ENCODE measurements at regions of chr2 and their contacts with region 1.

Region 1: GRCh38 chr2:105576440-105577252 is 168.1 kb upstream of the NCK2 start:
- DNase-seq: peak; percentile 54
- H3K4me3 ChIP-seq: no peak overlapping the region
- H3K27ac ChIP-seq: no peak overlapping the region
- H3K4me1 ChIP-seq: no peaks in the 10 kb centered on the region
- CTCF ChIP-seq: peak; percentile 76

Region 2: GRCh38 chr2:105563000-105563719 is 13.5 kb before region 1 on chr2:
- CTCF ChIA-PET with region 1: no interaction called
- POLR2A ChIA-PET with region 1: interaction called, 10 read pairs
- intact Hi-C with region 1: no loop called
- DNase-seq: no peak
- H3K4me3 ChIP-seq: no peak overlapping the region
- H3K27ac ChIP-seq: no peak overlapping the region
- H3K4me1 ChIP-seq: no peaks in the 10 kb centered on the region
- CTCF ChIP-seq: no peak

Region 3: GRCh38 chr2:105888625-105889400 is 312.2 kb after region 1 on chr2:
- CTCF ChIA-PET with region 1: no interaction called
- POLR2A ChIA-PET with region 1: interaction called, 3 read pairs
- intact Hi-C with region 1: loop called (anchors 10 kb)
- DNase-seq: peak; percentile 48
- H3K4me3 ChIP-seq: no peak overlapping the region
- H3K27ac ChIP-seq: no peak overlapping the region
- H3K4me1 ChIP-seq: peaks cover 22% of the 10 kb centered on the region
- CTCF ChIP-seq: peak; percentile 68

Region 4: DNA sequence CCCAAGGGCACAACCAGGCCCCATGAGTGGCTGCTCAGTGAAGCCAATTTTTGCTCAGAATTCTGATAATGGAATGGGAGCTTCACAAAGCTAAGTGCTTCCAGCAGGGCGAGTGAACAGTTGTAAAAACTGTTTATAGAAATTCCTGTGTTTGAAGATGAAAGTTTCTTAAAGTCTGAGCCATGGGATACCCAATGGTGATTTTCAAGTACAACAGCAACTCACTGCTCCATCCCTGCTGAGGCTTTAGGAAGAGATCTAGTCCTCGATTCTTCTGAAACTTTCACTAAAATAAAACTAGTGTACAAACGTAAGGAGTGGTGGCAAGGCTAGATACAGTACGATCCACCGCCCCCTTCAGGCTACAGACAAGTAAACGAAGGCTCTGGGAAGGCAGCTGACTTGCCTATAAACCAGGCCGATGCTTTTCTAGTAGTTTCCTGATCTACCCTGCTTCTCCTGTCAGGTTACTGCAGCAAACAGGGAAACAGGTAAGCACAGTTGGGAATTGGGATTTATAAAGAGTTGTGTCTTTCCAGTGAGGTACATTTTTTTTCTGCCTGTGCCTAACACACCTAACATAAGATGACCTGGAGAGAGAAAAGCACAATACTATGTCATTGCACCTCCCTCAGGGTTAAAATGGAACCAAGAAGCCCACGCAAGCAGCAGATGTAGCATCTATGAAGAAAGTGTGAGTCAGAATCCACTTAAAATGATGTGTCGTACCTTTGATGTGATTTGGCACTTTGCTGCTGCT is 508.7 kb after region 1 on chr2:
- CTCF ChIA-PET with region 1: no interaction called
- POLR2A ChIA-PET with region 1: no interaction called
- intact Hi-C with region 1: loop called (anchors 10 kb)
- DNase-seq: peak; percentile 43
- H3K4me3 ChIP-seq: no peak overlapping the region
- H3K27ac ChIP-seq: no peak overlapping the region
- H3K4me1 ChIP-seq: no peaks in the 10 kb centered on the region
- CTCF ChIP-seq: peak; percentile 64